IMR-90 (cell line): ENCODE measurements at regions of chr1 and their contacts with region 1.

Region 1: DNA sequence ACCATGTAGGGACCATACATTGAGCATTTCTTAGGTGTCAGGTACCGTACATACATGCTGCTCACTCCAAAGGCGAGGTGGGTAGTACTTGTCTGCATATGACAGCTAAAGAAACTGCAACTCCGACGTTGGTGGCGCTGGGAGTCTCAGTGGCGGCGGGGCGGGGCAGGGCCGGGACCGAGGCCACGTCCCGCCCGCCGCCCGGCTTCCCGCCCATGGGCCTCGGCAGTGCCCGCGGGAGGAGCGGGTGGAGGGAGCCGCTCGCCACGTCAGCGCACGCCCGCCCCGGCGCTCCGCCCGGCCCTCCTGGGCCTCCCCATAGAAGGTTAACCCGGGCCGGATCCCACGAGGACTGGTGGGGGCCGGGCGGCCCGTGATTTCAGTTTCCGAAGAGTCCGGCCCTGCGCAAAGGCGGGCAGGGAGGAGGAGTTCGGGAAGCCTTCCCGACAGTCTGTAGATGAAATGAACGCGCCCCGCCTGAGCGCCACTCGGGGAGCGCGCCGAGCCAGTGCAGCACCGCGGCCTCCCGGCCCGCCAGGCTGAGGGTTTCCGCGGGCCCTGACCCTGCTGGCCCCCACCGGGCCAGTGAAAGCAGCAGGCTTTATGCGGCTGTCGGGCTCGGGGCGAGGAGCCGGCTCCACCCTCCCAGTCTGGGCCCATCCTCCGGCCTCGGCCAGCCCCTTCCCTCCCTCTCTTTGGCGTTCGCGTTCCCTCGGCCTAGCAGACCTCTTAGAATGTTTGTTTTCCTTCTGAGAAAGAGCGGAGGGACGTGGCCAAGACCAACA is 119.9 kb upstream of the JUN start:
- DNase-seq: peak; percentile 89
- ATAC-seq: peak; percentile 89
- H3K4me3 ChIP-seq: peak overlapping the region; percentile 55
- H3K27ac ChIP-seq: peak overlapping the region; percentile 93
- H3K4me1 ChIP-seq: peaks cover 11% of the 10 kb centered on the region
- H3K27me3 ChIP-seq: no peaks in the 10 kb centered on the region
- CTCF ChIP-seq: no peak
- POLR2A ChIP-seq: peak; percentile 92
- RAD21 ChIP-seq: 0 out of 2 replicates have a peak, but pooled peaks have one; percentile 1

Region 2: DNA sequence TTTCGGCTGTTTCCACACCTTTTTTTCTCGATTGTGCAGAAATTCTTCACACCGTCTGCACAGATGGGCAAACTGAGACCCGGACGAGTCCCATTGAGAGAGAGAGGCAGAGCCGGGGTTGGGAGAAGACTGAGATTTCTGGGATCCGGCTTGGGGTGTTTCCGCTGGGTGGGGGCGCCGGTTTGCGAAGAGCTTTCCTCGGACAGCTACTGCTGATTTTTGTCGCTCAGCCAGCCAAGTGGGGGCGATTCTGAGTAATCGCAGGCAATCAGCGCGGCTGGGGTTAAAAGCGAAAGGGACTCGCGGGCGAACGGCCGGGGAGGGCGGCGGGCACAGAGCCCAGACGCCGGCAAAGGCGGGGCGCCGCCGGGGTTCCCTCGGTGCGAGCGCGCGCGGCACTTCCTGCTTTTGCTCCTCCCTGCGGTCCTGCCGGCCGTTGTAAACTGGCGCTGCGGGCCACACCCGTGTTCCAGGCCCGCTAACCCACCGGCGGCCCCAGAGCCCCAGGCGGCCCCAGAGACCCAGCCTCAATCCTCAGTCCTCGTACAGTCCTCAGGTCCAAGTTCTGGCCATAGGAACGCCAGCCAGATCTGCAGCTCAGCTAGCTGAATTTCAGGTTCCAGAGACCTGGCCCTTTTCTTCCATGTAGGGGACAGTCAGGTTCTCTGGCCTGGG is 87.5 kb before region 1 on chr1:
- CTCF ChIA-PET with region 1: no interaction called
- POLR2A ChIA-PET with region 1: no interaction called
- dilution Hi-C with region 1: no loop called
- in situ Hi-C with region 1: no loop called
- intact Hi-C with region 1: loop called (anchors 2 kb)
- DNase-seq: peak; percentile 89
- ATAC-seq: peak; percentile 69
- H3K4me3 ChIP-seq: peak overlapping the region; percentile 49
- H3K27ac ChIP-seq: peak overlapping the region; percentile 97
- H3K4me1 ChIP-seq: peaks cover 16% of the 10 kb centered on the region
- H3K27me3 ChIP-seq: no peaks in the 10 kb centered on the region
- CTCF ChIP-seq: 0 out of 2 replicates have a peak, but pooled peaks have one; percentile 10
- POLR2A ChIP-seq: no peak
- RAD21 ChIP-seq: no peak; the same call in 1 of the 2 replicates

Region 3: DNA sequence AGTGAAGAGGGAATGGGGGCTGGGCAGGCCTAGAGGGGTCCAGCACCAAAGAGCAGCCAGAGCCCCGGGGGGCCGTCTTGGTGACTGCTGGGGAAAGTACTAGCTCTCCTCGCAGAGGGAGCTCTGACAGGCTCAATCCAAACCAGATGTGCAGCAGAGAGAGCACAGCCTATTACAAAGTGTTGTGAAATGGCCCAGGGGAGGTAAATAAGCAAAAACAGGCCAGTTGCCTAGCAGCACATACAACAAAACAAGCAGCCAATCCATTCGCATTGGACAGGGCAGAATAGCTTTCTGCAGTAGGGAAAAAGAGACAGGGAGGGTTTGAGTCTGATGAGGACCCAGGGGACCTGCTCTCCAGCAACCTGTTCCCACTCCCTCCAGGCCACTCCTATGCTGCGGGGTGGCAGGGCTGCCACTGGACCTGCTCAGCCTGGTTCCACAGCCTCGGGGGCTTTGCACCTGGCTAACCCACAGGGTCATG is 153.5 kb after region 1 on chr1:
- CTCF ChIA-PET with region 1: no interaction called
- POLR2A ChIA-PET with region 1: no interaction called
- dilution Hi-C with region 1: no loop called
- in situ Hi-C with region 1: no loop called
- intact Hi-C with region 1: loop called (anchors 5 kb)
- DNase-seq: peak; percentile 93
- ATAC-seq: peak; percentile 76
- H3K4me3 ChIP-seq: no peak overlapping the region
- H3K27ac ChIP-seq: no peak overlapping the region
- H3K4me1 ChIP-seq: peaks cover 2% of the 10 kb centered on the region; the same call in 1 of the 2 replicates
- H3K27me3 ChIP-seq: no peaks in the 10 kb centered on the region
- CTCF ChIP-seq: no peak
- POLR2A ChIP-seq: no peak
- RAD21 ChIP-seq: peak; percentile 18

Region 4: GRCh38 chr1:59296358-59297256 is 392.9 kb after region 1 on chr1 and contains the start of gene FGGY:
- CTCF ChIA-PET with region 1: no interaction called
- POLR2A ChIA-PET with region 1: no interaction called
- dilution Hi-C with region 1: no loop called
- in situ Hi-C with region 1: no loop called
- intact Hi-C with region 1: loop called (anchors 5 kb)
- DNase-seq: peak; percentile 98
- ATAC-seq: peak; percentile 93
- H3K4me3 ChIP-seq: peak within 1 kb of the TSS; percentile 74
- H3K27ac ChIP-seq: peak within 1 kb of the TSS; percentile 99
- H3K4me1 ChIP-seq: peaks cover 6% of the 10 kb centered on the region
- H3K27me3 ChIP-seq: no peaks in the 10 kb centered on the region
- CTCF ChIP-seq: no peak
- POLR2A ChIP-seq: peak; percentile 84
- RAD21 ChIP-seq: peak; percentile 29; the same call in 1 of the 2 replicates
- total RNA-seq, gene FGGY: 12.8 and 14.0 TPM in 2 replicates

Region 5: GRCh38 chr1:59707178-59707791 is 803.6 kb after region 1 on chr1:
- CTCF ChIA-PET with region 1: no interaction called
- POLR2A ChIA-PET with region 1: no interaction called
- dilution Hi-C with region 1: no loop called
- in situ Hi-C with region 1: loop called (anchors 10 kb)
- intact Hi-C with region 1: no loop called
- DNase-seq: peak; percentile 98
- ATAC-seq: peak; percentile 85
- H3K4me3 ChIP-seq: no peak overlapping the region
- H3K27ac ChIP-seq: peak overlapping the region; percentile 92
- H3K4me1 ChIP-seq: peaks cover 29% of the 10 kb centered on the region
- H3K27me3 ChIP-seq: no peaks in the 10 kb centered on the region
- CTCF ChIP-seq: no peak
- POLR2A ChIP-seq: no peak
- RAD21 ChIP-seq: peak; percentile 18; the same call in 1 of the 2 replicates